Endothelial cell of umbilical vein (primary cell): ENCODE measurements at regions of chr10 and their contacts with region 1.

Region 1: DNA sequence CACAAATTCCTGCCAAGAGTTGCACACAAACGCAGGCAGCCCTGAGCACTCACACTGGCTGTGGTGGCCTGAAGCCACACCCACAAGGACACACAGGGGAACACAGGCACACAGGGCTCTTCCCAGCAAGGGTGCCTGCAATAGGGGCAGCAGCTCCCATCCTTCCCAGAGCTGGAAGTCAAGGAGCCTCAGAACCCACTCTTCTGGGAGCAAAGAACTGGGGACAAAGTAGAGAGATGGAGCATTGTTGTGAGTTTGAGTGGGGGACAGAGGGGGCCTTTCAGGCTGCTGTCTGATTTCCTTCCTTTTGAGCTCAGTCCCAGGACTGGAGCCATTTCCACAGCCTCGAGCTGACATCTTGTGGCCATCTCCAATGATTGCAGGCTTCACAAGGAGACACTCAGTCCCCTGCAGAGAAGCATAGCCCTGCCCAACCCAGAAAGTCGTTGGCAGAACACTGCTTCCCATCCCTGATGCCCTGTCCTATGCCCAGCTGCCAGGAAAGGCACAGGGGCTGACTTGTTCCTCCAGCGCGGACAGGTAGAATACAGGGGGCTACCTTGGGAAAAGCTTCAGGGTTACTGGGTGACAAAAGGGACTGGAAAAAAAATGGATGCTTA is 34.4 kb upstream of the SLF2 start:
- DNase-seq: peak; percentile 57
- H3K4me3 ChIP-seq: no peak overlapping the region
- H3K27ac ChIP-seq: no peak overlapping the region
- H3K4me1 ChIP-seq: peaks cover 13% of the 10 kb centered on the region
- H3K27me3 ChIP-seq: peaks cover 5 to 11% of the 10 kb centered on the region in 2 experiments
- CTCF ChIP-seq: peak; percentile 62 to 77
- POLR2A ChIP-seq: no peak

Region 2: DNA sequence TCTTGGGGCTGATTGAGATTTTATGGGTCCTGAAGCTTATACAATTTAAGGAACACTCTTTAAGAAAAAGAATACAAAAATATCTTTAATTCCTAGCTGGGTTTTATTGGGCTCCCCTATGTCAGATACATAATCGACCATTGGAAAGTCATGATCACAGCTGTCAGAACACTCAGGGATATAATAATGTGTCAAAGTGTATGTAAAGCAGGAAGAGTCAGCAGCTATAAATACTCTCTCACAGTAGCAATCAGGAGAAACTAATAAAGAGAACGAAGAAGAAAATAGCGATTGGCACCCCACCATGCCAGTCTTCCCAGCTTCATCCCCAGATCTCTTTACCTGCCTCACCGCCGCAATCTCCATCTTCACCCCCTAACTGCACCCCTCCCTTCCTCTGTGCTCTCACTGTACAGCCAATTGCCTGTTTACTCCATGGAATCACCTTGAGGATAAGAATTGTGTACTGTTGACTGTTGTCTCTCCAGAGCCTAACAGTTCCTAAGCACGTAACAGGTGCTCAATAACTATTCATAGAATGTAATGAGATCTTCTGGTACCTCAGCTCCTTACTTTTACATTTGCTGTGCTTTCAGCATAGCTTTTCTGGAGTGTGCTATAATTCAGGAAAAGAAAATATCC is 439.6 kb before region 1 on chr10:
- CTCF ChIA-PET with region 1: interaction called, 15 read pairs
- POLR2A ChIA-PET with region 1: no interaction called
- dilution Hi-C with region 1: no loop called
- intact Hi-C with region 1: loop called (anchors 1 kb)
- DNase-seq: no peak
- H3K4me3 ChIP-seq: no peak overlapping the region
- H3K27ac ChIP-seq: no peak overlapping the region
- H3K4me1 ChIP-seq: no peaks in the 10 kb centered on the region
- H3K27me3 ChIP-seq: peaks cover 2 to 4% of the 10 kb centered on the region in 2 experiments
- CTCF ChIP-seq: no peak
- POLR2A ChIP-seq: no peak

Region 3: DNA sequence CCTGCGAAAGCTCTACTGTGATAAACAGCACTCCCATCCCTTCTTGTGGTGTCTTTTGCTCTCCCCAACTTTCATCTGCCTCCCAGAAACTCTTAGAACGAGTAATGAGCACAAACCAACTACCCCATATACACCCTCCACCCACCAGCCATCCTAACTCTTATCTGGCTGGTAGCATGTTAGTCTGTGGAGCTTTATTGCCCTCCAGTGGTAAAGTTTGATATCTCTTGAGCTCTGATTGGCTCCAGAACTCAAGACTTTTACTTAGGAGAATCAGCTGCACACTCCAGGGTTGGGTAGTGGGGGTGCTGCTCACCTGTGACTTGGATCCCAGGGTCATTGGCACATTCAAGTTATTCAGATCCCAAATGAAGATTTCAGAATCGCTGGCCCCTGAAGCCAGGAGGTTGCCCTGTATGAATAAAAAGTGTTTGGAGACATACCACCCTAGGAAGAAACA is 369.7 kb before region 1 on chr10:
- CTCF ChIA-PET with region 1: interaction called, 11 read pairs
- POLR2A ChIA-PET with region 1: no interaction called
- dilution Hi-C with region 1: no loop called
- intact Hi-C with region 1: no loop called
- DNase-seq: peak; percentile 73
- H3K4me3 ChIP-seq: no peak overlapping the region
- H3K27ac ChIP-seq: no peak overlapping the region
- H3K4me1 ChIP-seq: no peaks in the 10 kb centered on the region
- H3K27me3 ChIP-seq: no peaks in the 10 kb centered on the region
- CTCF ChIP-seq: peak; percentile 51 to 54
- POLR2A ChIP-seq: no peak

Region 4: GRCh38 chr10:100670828-100671479 is 207.4 kb before region 1 on chr10:
- CTCF ChIA-PET with region 1: interaction called, 43 read pairs
- POLR2A ChIA-PET with region 1: no interaction called
- dilution Hi-C with region 1: no loop called
- intact Hi-C with region 1: loop called (anchors 1 kb)
- DNase-seq: no peak
- H3K4me3 ChIP-seq: no peak overlapping the region
- H3K27ac ChIP-seq: no peak overlapping the region
- H3K4me1 ChIP-seq: no peaks in the 10 kb centered on the region
- H3K27me3 ChIP-seq: peaks cover 32 to 42% of the 10 kb centered on the region in 2 experiments
- CTCF ChIP-seq: peak; percentile 63 to 78
- POLR2A ChIP-seq: no peak

Region 5: DNA sequence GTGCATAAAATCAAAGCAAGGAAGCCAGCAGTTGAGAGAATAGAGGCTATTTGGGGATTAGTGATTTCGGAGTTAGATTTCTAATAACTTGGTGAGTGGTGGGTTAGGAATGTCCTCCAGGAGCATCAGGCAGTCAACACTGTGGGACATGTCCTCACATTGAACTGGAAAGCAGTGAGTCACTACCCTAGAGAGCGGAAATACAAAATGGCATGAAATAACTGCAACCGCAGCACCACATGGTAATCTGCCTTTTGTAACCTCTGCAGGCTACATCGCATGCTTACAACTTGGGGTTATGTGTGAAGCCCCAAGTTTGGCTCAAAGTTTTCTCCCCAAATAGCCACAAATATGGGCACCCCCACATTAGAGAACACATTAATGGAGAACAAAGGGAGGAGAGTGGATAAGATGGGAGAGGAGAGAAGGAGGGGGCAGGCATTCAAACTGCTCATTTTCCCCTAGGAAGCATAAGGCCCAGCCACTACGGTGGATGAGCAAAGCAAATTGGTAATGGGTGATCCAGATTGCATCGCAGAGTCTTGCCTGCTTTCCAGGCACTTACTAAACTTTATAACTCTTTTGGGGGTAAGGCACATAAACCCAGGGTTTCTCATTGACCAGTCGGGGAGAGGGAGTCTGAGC is 12.4 kb after region 1 on chr10:
- CTCF ChIA-PET with region 1: interaction called, 27 read pairs
- POLR2A ChIA-PET with region 1: no interaction called
- dilution Hi-C with region 1: no loop called
- intact Hi-C with region 1: no loop called
- DNase-seq: peak; percentile 64
- H3K4me3 ChIP-seq: no peak overlapping the region
- H3K27ac ChIP-seq: peak overlapping the region; percentile 86
- H3K4me1 ChIP-seq: peaks cover 16% of the 10 kb centered on the region
- H3K27me3 ChIP-seq: peaks cover 15 to 30% of the 10 kb centered on the region in 2 experiments
- CTCF ChIP-seq: no peak
- POLR2A ChIP-seq: no peak

Region 6: GRCh38 chr10:100943508-100943907 is 65.1 kb after region 1 on chr10:
- CTCF ChIA-PET with region 1: no interaction called
- POLR2A ChIA-PET with region 1: no interaction called
- dilution Hi-C with region 1: no loop called
- intact Hi-C with region 1: no loop called
- DNase-seq: no peak
- H3K4me3 ChIP-seq: no peak overlapping the region
- H3K27ac ChIP-seq: no peak overlapping the region
- H3K4me1 ChIP-seq: no peaks in the 10 kb centered on the region
- H3K27me3 ChIP-seq: no peaks in the 10 kb centered on the region
- CTCF ChIP-seq: no peak
- POLR2A ChIP-seq: no peak

Region 7: GRCh38 chr10:100962351-100963080 is 84.1 kb after region 1 on chr10:
- CTCF ChIA-PET with region 1: no interaction called
- POLR2A ChIA-PET with region 1: no interaction called
- dilution Hi-C with region 1: no loop called
- intact Hi-C with region 1: no loop called
- DNase-seq: no peak
- H3K4me3 ChIP-seq: no peak overlapping the region
- H3K27ac ChIP-seq: no peak overlapping the region
- H3K4me1 ChIP-seq: no peaks in the 10 kb centered on the region
- H3K27me3 ChIP-seq: no peaks in the 10 kb centered on the region
- CTCF ChIP-seq: no peak
- POLR2A ChIP-seq: no peak